ENCODE measurements at regions of chr15 and their contacts with region 1.

Region 1: GRCh38 chr15:63048115-63048775 is 5.7 kb downstream of the TPM1 start:
- DNase-seq: peak; percentile 87 to 92
- ATAC-seq: peak; percentile 49 to 88 (median 78)
- H3K4me3 ChIP-seq: peak overlapping the region; percentile 66 to 92 (median 81)
- H3K27ac ChIP-seq: peak overlapping the region; percentile 88 to 99 (median 96)
- H3K4me1 ChIP-seq: peaks cover 19 to 76% (median 59%) of the 10 kb centered on the region in 9 donors
- H3K27me3 ChIP-seq: peaks cover 0 to 41% (median 0%) of the 10 kb centered on the region in 7 donors
- CTCF ChIP-seq: peak; percentile 84 to 95 (median 92)

Region 2: GRCh38 chr15:62326437-62327011 is 721.7 kb before region 1 on chr15:
- intact Hi-C with region 1: no loop called
- DNase-seq: no peak
- ATAC-seq: no peak
- H3K4me3 ChIP-seq: no peak overlapping the region
- H3K27ac ChIP-seq: no peak overlapping the region
- H3K4me1 ChIP-seq: no peaks in the 10 kb centered on the region
- H3K27me3 ChIP-seq: peaks cover 0 to 21% (median 8%) of the 10 kb centered on the region in 7 donors
- CTCF ChIP-seq: no peak

Region 3: GRCh38 chr15:62847900-62848489 is 200.2 kb before region 1 on chr15:
- intact Hi-C with region 1: loop called in 8 of 10 experiments (anchors 2 to 5 kb)
- DNase-seq: peak; percentile 74
- ATAC-seq: peak; percentile 57 to 82 (median 75)
- H3K4me3 ChIP-seq: no peak overlapping the region
- H3K27ac ChIP-seq: peak overlapping the region in 5 of 10 donors; percentile 11 to 30 (median 21)
- H3K4me1 ChIP-seq: peaks cover 0 to 49% (median 22%) of the 10 kb centered on the region in 9 donors
- H3K27me3 ChIP-seq: no peaks in the 10 kb centered on the region
- CTCF ChIP-seq: peak; percentile 64 to 87 (median 80)

Region 4: DNA sequence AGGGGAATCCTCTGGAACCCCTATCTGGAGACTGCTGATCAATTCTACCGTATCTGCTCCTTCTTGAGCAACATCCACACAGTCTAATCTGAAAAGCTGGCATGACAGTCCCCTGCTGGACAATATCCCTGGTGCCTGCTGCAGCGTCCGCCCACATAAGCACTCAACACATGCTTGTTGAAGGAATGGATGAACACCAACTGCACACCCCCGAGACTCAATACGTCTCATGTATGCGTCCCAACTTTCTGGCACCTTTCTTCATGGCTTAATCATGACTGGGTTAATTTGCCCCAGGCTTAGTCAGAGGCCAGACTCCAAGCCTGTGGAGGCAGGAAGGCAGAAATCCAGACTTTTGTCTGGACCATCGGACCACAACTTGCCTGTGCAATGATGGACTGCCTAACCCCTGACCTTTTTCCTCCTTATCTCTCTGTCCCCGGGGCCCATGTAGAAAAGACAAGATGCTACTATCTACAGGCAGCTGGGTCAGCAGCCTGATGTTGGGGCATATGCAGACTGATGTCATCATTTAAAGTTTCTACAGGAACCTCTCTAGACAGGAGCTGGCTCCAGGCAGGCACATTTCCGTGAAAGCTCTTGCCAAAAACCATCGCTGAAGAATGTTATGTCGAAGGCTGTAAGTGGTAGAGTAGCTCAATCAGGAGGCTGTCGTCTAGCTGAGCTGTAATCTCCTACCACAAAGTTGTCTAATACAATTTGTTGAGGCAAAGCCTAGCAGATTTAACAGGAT is 119.8 kb before region 1 on chr15:
- intact Hi-C with region 1: loop called in 1 of 10 experiments (anchors 10 kb)
- DNase-seq: peak in 1 of 2 donors; percentile 42
- ATAC-seq: peak; percentile 66 to 89 (median 84)
- H3K4me3 ChIP-seq: no peak overlapping the region
- H3K27ac ChIP-seq: peak overlapping the region in 7 of 10 donors; percentile 11 to 58 (median 45)
- H3K4me1 ChIP-seq: peaks cover 3 to 51% (median 17%) of the 10 kb centered on the region in 9 donors
- H3K27me3 ChIP-seq: no peaks in the 10 kb centered on the region
- CTCF ChIP-seq: peak in 7 of 9 donors; percentile 11 to 38 (median 27)

Region 5: DNA sequence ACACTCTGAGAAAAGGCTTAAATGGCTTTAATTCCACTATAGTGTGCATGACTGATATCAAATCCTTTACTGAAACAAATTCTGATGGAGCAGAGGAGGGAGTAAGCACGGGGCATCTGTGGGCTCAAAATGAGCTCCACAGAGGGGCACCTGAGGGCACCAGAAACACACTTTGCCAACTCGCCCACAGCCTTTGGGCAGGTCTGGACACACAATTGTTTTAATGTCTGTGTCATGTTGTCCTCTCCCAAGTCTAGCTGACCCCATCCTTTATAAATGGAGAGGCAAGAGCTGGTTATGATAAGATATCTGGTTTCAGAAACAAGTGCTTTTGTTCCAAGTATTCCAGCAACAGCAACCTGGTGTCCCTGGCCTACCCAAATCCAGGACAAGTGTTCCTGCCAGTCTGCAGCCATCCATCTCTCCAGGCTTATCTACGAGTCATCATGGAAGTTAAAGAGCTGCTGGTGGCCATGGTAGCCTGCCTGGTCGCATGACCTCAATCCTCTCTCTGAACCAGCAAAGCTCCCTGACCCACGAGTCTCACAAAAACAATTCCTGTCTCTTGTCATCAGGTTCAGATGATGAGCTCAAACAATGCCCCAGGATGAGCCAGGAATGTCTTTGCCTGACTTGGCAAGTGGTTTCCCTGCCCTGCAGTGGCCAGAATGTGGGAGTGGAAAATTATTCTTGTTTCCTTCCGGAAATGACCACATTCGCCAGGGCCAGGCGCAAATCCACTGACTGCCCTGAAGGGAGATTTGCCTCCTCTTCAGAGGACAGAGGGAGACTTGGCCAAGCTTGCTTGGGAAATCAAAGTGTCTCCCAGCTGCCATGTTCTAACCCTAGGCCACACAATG is 70.1 kb before region 1 on chr15:
- intact Hi-C with region 1: no loop called
- DNase-seq: no peak
- ATAC-seq: peak in 6 of 8 donors; percentile 34 to 73 (median 62)
- H3K4me3 ChIP-seq: no peak overlapping the region
- H3K27ac ChIP-seq: peak overlapping the region in 5 of 10 donors; percentile 19 to 56 (median 40)
- H3K4me1 ChIP-seq: peaks cover 0 to 18% (median 0%) of the 10 kb centered on the region in 9 donors
- H3K27me3 ChIP-seq: no peaks in the 10 kb centered on the region
- CTCF ChIP-seq: no peak

Region 6: GRCh38 chr15:63093486-63094205 is 45.4 kb after region 1 on chr15:
- intact Hi-C with region 1: loop called (anchors 1 to 5 kb)
- DNase-seq: peak; percentile 72 to 86
- ATAC-seq: peak; percentile 85 to 96 (median 92)
- H3K4me3 ChIP-seq: no peak overlapping the region
- H3K27ac ChIP-seq: peak overlapping the region in 4 of 10 donors; percentile 28 to 66 (median 39)
- H3K4me1 ChIP-seq: peaks cover 8 to 30% (median 21%) of the 10 kb centered on the region in 9 donors
- H3K27me3 ChIP-seq: no peaks in the 10 kb centered on the region
- CTCF ChIP-seq: peak; percentile 82 to 97 (median 90)

Region 7: DNA sequence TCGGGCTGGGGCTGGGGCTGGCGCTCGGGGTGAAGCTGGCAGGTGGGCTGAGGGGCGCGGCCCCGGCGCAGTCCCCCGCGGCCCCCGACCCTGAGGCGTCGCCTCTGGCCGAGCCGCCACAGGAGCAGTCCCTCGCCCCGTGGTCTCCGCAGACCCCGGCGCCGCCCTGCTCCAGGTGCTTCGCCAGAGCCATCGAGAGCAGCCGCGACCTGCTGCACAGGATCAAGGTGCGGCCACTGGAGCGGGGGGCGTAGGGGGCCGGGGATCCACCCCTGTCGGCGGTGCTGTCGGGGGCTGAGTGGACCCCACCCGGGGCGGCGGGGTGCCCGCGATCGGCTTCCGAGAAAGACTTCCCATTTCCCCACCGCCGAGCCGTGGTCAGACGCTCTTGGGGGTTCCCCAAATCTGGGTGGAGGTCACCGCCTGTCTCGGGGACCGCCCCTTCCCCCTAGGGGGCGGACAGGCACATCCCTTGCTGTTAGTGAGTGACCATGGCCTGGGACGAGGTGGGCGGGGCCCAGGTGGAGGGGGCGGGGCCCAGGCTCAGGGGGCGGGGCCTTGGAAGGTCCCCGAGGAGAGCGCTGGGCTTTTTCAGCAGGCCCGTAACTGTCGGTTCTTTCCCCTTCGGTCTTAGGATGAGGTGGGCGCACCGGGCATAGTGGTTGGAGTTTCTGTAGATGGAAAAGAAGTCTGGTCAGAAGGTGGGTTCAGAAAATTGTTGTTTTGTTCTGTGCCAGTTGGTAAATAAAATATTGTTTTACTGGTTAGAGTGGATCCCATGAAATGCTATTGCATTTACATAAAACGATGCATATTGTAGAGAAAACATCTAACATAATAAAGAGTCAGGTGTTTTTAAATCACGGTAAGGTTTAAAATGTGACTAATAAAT is 74.0 kb after region 1 on chr15:
- intact Hi-C with region 1: loop called in 1 of 10 experiments (anchors 2 kb)
- DNase-seq: peak; percentile 81 to 84
- ATAC-seq: peak; percentile 95 to 98 (median 98)
- H3K4me3 ChIP-seq: peak overlapping the region; percentile 91 to 100 (median 97)
- H3K27ac ChIP-seq: peak overlapping the region; percentile 94 to 98 (median 96)
- H3K4me1 ChIP-seq: peaks cover 0 to 13% (median 8%) of the 10 kb centered on the region in 9 donors
- H3K27me3 ChIP-seq: no peaks in the 10 kb centered on the region
- CTCF ChIP-seq: peak in 6 of 9 donors; percentile 24 to 53 (median 38)

Measured in heart right ventricle (tissue), 16 donors.